ENCODE measurements at regions of chr17 and their contacts with region 1.

Region 1: GRCh38 chr17:39754161-39754951 is 16.6 kb downstream of the GRB7 start:
- DNase-seq: peak; percentile 96 to 97 (median 97)
- ATAC-seq: peak; percentile 88 to 93 (median 90)
- H3K4me3 ChIP-seq: peak overlapping the region; percentile 54 to 79 (median 71)
- H3K27ac ChIP-seq: peak overlapping the region; percentile 82 to 97 (median 90)
- H3K4me1 ChIP-seq: peaks cover 0 to 18% (median 2%) of the 10 kb centered on the region in 4 donors
- H3K27me3 ChIP-seq: no peaks in the 10 kb centered on the region
- CTCF ChIP-seq: peak; percentile 97 to 100 (median 98)
- POLR2A ChIP-seq: peak; percentile 76

Region 2: DNA sequence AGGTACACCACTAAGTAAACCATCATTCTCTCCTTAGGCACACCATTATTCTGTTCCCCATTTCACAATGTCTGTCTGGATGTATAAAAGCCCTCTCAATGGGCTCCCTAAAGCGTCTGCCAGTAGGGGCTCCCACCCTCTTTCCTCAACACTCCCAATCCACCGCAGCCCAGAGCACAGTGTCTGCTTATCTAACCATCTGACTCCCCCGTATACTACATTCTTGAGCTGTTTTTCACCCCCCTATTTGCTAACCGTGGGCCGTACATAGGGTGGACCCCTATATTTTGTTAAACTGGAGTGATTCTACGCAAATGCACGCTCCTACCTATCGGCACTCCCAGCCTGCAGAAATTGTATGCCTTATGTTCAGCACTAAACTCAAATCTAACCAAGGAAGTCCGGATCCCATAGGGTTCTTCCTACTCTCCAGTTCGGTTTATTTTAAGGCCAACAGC is 225.6 kb after region 1 on chr17:
- intact Hi-C with region 1: loop called in 1 of 2 experiments (anchors 10 kb)
- DNase-seq: no peak
- ATAC-seq: peak; percentile 4 to 25 (median 16)
- H3K4me3 ChIP-seq: peak overlapping the region; percentile 25 to 93 (median 48)
- H3K27ac ChIP-seq: peak overlapping the region in 2 of 3 donors; percentile 21 to 57
- H3K4me1 ChIP-seq: peaks cover 0 to 14% (median 6%) of the 10 kb centered on the region in 4 donors
- H3K27me3 ChIP-seq: no peaks in the 10 kb centered on the region
- CTCF ChIP-seq: no peak
- POLR2A ChIP-seq: no peak

Measured in right lobe of liver (tissue), 6 donors.